Activated CD4-positive, alpha-beta T cell treated with anti-CD3 and anti-CD28 coated beads for 36 hours (primary cell): ENCODE measurements at regions of chr2 and their contacts with region 1.

Region 1: GRCh38 chr2:231674587-231675338 is 33.6 kb upstream of the PTMA start:
- DNase-seq: peak; percentile 81
- ATAC-seq: peak; percentile 84
- H3K4me3 Mint-ChIP-seq: no peak overlapping the region
- H3K27ac Mint-ChIP-seq: no peak overlapping the region
- H3K4me1 Mint-ChIP-seq: peaks cover 10% of the 10 kb centered on the region
- H3K27me3 Mint-ChIP-seq: no peaks in the 10 kb centered on the region

Region 2: DNA sequence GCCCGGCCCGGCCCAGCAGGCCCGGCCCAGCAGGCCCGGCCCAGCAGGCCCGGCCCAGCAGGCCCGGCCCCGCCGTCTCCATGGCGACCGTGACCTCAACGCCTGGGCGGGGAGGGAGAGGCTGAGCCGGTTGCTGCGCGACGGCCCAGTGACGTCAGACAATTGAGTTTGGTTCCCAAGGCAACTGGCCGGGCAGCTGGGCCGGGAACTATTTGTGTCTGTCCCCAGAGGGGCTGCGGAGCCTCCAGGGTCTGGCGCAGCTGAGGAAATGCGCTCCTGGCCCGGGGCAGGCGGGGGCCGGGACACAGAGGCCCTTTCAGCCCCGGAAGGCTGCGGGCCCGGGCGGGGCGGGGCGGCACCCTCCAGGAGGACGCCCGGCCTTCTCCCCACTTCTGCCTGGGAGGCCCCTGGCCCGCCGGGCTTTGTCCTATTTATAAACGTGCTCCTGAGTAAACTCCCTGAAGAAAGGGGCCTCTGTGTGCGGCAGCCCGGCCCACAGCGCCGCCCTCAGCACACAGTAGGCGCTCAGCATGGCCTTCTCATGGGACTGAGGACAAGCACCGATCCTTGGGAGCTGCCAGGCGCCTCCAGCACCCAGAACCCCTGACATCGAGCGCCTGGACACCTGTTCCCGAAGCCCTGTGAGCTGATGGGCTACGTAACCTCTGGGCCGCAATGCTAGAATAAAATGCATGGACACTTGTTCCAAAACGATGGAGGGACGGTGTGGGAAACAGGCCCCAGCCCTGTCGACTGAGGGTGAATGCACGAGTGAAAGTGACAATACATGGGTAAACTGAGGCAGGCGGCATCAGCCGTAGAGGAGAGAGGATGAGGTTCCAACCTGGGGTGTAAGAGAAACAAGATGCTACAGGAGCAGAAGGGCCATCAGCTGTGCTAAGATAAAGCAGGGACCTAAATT is 69.8 kb before region 1 on chr2:
- CTCF ChIA-PET with region 1: interaction called, 107 read pairs
- POLR2A ChIA-PET with region 1: interaction called, 4 read pairs
- intact Hi-C with region 1: no loop called
- DNase-seq: peak; percentile 98
- ATAC-seq: peak; percentile 81
- H3K4me3 Mint-ChIP-seq: peak overlapping the region; percentile 26
- H3K27ac Mint-ChIP-seq: no peak overlapping the region
- H3K4me1 Mint-ChIP-seq: peaks cover 6% of the 10 kb centered on the region
- H3K27me3 Mint-ChIP-seq: peaks cover 2% of the 10 kb centered on the region

Region 3: GRCh38 chr2:231648587-231649174 is 26.1 kb before region 1 on chr2:
- CTCF ChIA-PET with region 1: interaction called, 11 read pairs
- POLR2A ChIA-PET with region 1: interaction called, 8 read pairs
- intact Hi-C with region 1: loop called (anchors 1 kb)
- DNase-seq: peak; percentile 81
- ATAC-seq: peak; percentile 96
- H3K4me3 Mint-ChIP-seq: no peak overlapping the region
- H3K27ac Mint-ChIP-seq: no peak overlapping the region
- H3K4me1 Mint-ChIP-seq: peaks cover 2% of the 10 kb centered on the region
- H3K27me3 Mint-ChIP-seq: no peaks in the 10 kb centered on the region

Region 4: GRCh38 chr2:231687133-231687852 is 12.5 kb after region 1 on chr2:
- CTCF ChIA-PET with region 1: interaction called, 44 read pairs
- POLR2A ChIA-PET with region 1: no interaction called
- intact Hi-C with region 1: no loop called
- DNase-seq: peak; percentile 82
- ATAC-seq: peak; percentile 93
- H3K4me3 Mint-ChIP-seq: no peak overlapping the region
- H3K27ac Mint-ChIP-seq: no peak overlapping the region
- H3K4me1 Mint-ChIP-seq: peaks cover 2% of the 10 kb centered on the region
- H3K27me3 Mint-ChIP-seq: peaks cover 2% of the 10 kb centered on the region

Region 5: DNA sequence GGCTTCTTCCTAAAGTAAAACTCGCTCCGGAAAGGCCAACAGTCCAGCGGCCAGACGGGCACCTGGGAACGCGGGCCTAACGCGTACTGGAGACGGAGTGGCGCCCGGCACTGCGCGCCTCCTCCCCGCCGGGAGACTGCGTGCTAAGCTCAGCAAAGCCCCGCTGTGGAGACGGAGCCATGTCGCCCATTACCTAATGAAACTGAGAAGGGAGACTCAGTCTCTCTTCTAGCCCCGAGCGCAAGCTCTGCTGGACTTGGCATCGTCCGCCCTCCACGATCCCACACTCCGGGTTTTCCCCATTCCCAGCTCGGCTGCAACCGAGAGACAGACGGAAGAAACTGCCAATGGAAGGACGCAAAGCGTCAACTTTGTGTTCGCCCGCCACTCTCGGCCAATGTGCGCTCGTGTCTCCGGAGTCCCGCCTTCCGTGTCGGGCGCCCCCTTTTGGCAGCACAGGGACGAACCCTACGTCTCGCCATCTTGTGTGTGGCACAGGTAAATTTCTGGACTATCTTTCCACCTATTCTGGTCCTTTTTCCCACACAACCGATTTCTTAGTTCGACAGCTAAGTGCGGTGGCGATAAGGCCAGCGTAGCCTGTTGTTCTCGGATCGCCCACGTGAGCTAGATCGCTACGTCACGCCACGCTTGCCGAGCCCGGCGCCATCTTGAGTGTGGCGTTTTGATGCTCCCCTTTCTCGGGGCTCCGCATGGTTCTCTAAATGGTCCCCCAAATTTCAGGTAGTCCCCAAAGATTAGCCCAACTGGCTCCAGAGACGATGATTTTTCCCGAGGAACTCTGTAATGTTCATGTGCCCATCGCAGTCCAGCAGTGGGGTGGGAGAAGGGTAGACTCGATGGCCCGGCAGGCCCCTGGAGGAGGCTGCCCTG is 32.2 kb after region 1 on chr2:
- CTCF ChIA-PET with region 1: interaction called, 260 read pairs
- POLR2A ChIA-PET with region 1: interaction called, 10 read pairs
- intact Hi-C with region 1: no loop called
- DNase-seq: peak; percentile 99
- ATAC-seq: peak; percentile 59
- H3K4me3 Mint-ChIP-seq: peak overlapping the region; percentile 85
- H3K27ac Mint-ChIP-seq: peak overlapping the region; percentile 100
- H3K4me1 Mint-ChIP-seq: peaks cover 15% of the 10 kb centered on the region
- H3K27me3 Mint-ChIP-seq: peaks cover 2% of the 10 kb centered on the region